Activated CD4-positive, alpha-beta T cell treated with anti-CD3 and anti-CD28 coated beads, Interleukin-2, amount 10 ng/mL, durations not matched to agents 24 days and 14 days (primary cell): ENCODE measurements at regions of chr17 and their contacts with region 1.

Region 1: GRCh38 chr17:43211480-43212402 is at the start of gene TMEM106A:
- DNase-seq: peak; percentile 91
- H3K4me3 Mint-ChIP-seq: peak within 1 kb of the TSS; percentile 99
- H3K27ac Mint-ChIP-seq: peak within 1 kb of the TSS; percentile 90
- H3K4me1 Mint-ChIP-seq: peaks cover 32% of the 10 kb centered on the region
- H3K27me3 Mint-ChIP-seq: no peaks in the 10 kb centered on the region
- total RNA-seq, gene TMEM106A: 17.9 and 19.1 TPM in 2 replicates

Region 2: GRCh38 chr17:43170766-43171585 is 40.8 kb before region 1 on chr17 and contains the start of gene NBR1:
- intact Hi-C with region 1: loop called (anchors 1 kb)
- DNase-seq: peak; percentile 99
- H3K4me3 Mint-ChIP-seq: no peak within 1 kb of the TSS
- H3K27ac Mint-ChIP-seq: no peak within 1 kb of the TSS
- H3K4me1 Mint-ChIP-seq: peaks cover 30% of the 10 kb centered on the region
- H3K27me3 Mint-ChIP-seq: no peaks in the 10 kb centered on the region
- total RNA-seq, gene NBR1: 51.2 and 53.5 TPM in 2 replicates